Ascending aorta (tissue), 2 donors: ENCODE measurements at regions of chr9 and their contacts with region 1.

Region 1: DNA sequence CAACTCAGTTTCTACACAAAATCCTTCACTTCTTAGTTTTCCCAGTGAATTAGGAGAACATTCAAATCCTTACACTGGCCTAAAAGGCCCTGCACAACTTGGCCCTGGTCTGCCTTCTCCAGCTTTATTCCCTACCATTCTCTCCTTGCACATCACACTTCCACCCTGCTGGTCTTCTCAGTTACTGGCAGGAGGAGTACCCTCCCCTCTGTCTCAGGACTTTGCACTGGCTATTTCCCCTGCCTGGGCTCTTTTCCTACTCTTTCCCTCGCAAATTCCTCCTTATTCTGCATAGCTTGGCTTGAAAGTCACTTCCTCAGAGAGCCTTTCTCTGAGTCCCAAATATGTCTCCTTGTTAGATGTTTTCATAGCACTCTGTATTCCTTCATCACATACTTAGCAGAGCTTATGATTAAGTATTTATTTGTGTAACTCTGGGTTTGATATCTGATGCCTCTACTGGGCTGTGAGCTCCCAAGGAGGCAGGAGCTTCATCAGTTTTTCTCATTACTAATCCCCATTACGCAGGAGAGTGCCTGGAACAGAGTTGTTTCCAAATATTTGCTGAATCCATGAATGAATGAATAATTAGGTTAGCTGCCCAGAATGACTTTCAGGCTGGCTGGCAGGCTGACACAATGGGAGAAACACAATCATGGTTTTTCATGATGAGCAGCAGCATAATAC is 159.8 kb upstream of the KLF9 start:
- DNase-seq: peak in 1 of 2 donors; percentile 87
- H3K4me3 ChIP-seq: no peak overlapping the region
- H3K27ac ChIP-seq: peak overlapping the region; percentile 68 to 71
- H3K4me1 ChIP-seq: peaks cover 3 to 11% of the 10 kb centered on the region in 2 donors
- H3K27me3 ChIP-seq: no peaks in the 10 kb centered on the region
- CTCF ChIP-seq: no peak

Region 2: DNA sequence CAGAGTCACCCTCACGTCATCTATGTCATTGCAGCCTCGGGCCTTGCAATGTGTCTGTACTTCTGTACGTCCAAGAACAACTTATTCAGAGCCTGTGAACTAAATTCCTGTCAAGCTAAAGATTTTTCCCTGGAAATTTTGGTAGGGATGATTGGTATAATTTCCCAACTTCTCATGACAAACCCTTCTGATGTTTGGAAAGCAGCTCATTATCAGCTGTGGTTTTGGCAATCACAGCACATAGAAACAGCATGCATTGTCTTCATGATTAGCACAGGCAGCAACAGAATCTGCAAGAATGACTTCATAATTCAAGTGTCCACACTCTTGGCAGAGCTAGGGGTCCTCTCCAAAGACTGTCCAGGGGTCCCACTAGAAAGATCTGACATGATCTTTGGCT is 951.6 kb before region 1 on chr9:
- intact Hi-C with region 1: no loop called
- DNase-seq: no peak
- H3K4me3 ChIP-seq: no peak overlapping the region
- H3K27ac ChIP-seq: no peak overlapping the region
- H3K4me1 ChIP-seq: no peaks in the 10 kb centered on the region
- H3K27me3 ChIP-seq: no peaks in the 10 kb centered on the region
- CTCF ChIP-seq: no peak

Region 3: DNA sequence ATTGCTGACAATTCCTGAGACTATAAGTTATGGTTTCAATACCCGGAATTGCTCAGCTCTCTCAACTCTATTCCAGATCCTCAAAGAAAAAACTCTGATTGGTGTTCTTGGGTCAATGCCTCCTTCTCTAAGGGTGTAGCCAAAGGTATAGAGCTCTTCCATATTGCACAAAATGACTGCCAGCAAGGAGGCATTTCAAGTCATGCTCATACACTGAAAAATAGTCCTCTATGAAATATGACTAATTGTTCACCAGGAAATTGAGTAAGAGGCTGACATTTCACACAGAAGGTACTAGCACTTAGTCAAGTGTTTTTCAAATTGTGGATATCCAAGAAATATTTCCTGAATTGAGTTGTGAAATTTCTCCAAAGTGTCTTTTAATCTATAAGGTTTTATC is 48.8 kb before region 1 on chr9:
- intact Hi-C with region 1: loop called (anchors 5 kb)
- DNase-seq: no peak
- H3K4me3 ChIP-seq: no peak overlapping the region
- H3K27ac ChIP-seq: no peak overlapping the region
- H3K4me1 ChIP-seq: no peaks in the 10 kb centered on the region
- H3K27me3 ChIP-seq: no peaks in the 10 kb centered on the region
- CTCF ChIP-seq: no peak